ENCODE measurements at regions of chr20 and their contacts with region 1.

Region 1: DNA sequence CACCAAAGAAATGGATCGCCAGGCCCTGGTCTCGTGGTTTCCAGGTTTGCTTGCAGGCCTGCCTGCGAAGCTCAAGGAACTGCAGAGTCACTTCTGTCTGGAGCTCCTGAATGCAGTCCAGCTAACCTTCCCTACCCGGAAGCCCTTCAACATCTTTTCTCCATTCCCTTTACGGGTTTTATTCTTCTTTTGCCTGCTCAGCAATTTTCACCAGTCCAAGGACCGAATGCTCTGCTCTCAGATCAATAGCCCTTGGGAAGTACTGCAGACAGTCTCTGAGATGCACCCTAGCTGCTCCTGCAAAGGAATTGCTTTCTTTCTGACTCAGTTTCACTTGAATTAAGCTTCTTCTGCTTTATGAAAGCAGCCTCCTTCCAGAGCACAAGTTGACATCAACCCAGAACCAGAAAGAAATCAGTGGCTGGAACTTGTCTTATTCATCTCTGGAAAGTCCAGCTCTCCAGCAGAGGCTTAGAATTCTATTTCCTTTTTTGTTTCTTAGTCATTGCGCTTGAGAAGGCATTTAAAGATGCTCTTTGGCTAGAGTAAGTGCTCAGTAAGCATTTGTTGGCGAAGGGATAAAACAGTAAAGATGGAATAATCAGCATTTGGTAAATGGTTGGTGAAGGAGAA is 18.7 kb upstream of the YWHAB start:
- DNase-seq: no peak
- ATAC-seq: 0 out of 2 replicates have a peak, but pooled peaks have one; percentile 31
- H3K4me3 ChIP-seq: no peak overlapping the region
- H3K27ac ChIP-seq: no peak overlapping the region
- H3K4me1 ChIP-seq: peaks cover 5% of the 10 kb centered on the region; the same call in 1 of the 2 replicates
- H3K27me3 ChIP-seq: no peaks in the 10 kb centered on the region
- CTCF ChIP-seq: no peak

Region 2: DNA sequence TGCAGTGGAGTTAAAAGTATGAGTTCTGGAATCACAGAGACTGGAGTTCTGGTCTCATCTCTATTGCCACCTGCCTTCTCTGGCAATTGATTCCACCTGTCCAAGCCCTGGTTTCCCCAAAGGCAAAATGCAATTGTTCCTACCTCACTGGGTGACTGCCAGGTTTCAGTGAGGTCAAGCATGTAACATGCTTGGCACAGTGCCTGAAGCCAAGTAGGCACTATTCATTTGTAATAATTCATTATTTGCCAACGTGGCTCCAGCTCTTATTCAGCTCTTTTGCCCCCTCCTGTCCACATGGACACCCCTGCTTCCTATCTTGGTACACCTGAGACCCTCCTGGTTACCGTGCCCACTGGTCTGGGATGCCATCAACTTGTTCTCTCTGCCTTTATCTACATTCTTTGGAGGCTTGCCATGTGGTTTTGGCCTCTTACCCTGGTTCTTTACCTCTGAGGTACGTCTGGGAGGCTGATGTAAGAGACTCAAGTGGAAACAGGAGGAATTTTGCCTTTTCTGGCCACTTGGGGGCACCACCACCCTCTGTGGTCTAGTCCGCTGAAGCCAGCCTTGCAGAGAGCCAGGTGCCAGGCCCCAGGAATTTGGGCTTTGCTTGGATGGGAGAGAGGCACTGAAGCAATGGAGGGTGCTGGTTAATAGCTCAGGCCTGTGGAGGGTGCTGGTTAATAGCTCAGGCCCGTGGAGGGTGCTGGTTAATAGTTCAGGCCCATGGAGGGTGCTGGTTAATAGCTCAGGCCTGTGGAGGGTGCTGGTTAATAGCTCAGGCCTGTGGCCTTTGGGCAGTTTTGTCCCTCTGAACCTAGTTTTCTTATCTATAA is 119.4 kb before region 1 on chr20:
- CTCF ChIA-PET with region 1: interaction called, 6 read pairs
- POLR2A ChIA-PET with region 1: no interaction called
- in situ Hi-C with region 1: no loop called
- intact Hi-C with region 1: loop called (anchors 1 kb)
- DNase-seq: peak; percentile 69
- ATAC-seq: peak; percentile 82
- H3K4me3 ChIP-seq: peak overlapping the region; percentile 52 to 88
- H3K27ac ChIP-seq: peak overlapping the region; percentile 86; the same call in 1 of the 2 replicates
- H3K4me1 ChIP-seq: peaks cover 22% of the 10 kb centered on the region
- H3K27me3 ChIP-seq: no peaks in the 10 kb centered on the region
- CTCF ChIP-seq: peak; percentile 88

Region 3: GRCh38 chr20:44785769-44786168 is 81.0 kb before region 1 on chr20:
- CTCF ChIA-PET with region 1: interaction called, 16 read pairs
- POLR2A ChIA-PET with region 1: no interaction called
- in situ Hi-C with region 1: no loop called
- intact Hi-C with region 1: no loop called
- DNase-seq: no peak
- ATAC-seq: peak; percentile 77
- H3K4me3 ChIP-seq: no peak overlapping the region
- H3K27ac ChIP-seq: no peak overlapping the region
- H3K4me1 ChIP-seq: no peaks in the 10 kb centered on the region
- H3K27me3 ChIP-seq: no peaks in the 10 kb centered on the region
- CTCF ChIP-seq: no peak; the same call in 1 of the 2 replicates

Region 4: GRCh38 chr20:44800398-44801046 is 66.3 kb before region 1 on chr20:
- CTCF ChIA-PET with region 1: no interaction called
- POLR2A ChIA-PET with region 1: no interaction called
- in situ Hi-C with region 1: no loop called
- intact Hi-C with region 1: loop called (anchors 5 kb)
- DNase-seq: no peak
- ATAC-seq: no peak
- H3K4me3 ChIP-seq: no peak overlapping the region
- H3K27ac ChIP-seq: no peak overlapping the region
- H3K4me1 ChIP-seq: no peaks in the 10 kb centered on the region
- H3K27me3 ChIP-seq: no peaks in the 10 kb centered on the region
- CTCF ChIP-seq: peak; percentile 74

Region 5: DNA sequence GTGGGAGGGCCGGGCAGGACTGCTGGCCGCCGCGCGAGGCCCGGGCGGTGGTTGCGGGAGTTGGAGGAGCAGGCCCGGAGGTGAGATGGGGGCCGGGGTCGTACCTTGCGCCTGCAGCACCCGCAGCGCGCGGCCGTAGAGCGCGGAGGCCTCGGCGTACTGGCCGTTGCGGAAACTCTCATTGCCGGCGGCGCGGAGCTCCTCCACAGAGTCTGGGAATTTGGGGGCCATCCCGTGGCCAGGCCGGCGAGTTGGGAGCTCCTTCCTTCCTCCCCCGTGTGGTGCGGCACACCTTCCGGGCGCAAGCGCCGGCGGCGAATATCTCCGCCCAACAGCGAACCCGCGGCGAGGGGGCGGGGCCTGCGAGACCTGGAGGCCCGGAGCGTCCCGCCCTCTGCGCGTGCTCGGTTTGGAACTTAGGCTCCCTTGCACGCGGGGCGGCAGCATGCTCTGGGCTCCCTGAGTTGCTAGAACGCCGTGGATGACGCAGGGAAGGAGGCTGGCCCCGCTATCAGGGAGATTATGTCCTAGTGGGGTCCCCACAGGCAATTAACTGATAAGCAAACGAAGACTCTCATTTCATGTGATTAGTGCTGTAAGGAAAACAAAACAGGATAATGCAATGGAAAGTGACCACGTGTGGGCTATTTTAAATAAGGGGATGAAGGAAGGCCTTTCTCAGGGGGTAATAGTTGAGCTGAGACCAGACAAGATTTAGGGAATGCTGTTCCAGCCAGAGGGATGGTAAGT is 93.5 kb after region 1 on chr20 and contains the start of gene TOMM34:
- CTCF ChIA-PET with region 1: no interaction called
- POLR2A ChIA-PET with region 1: no interaction called
- in situ Hi-C with region 1: no loop called
- intact Hi-C with region 1: no loop called
- DNase-seq: peak; percentile 70
- ATAC-seq: peak; percentile 99
- H3K4me3 ChIP-seq: peak within 1 kb of the TSS; percentile 77 to 91
- H3K27ac ChIP-seq: peak within 1 kb of the TSS; percentile 94
- H3K4me1 ChIP-seq: peaks cover 10% of the 10 kb centered on the region
- H3K27me3 ChIP-seq: no peaks in the 10 kb centered on the region
- CTCF ChIP-seq: no peak
- total RNA-seq, gene TOMM34: 30.6 TPM

Measured in Panc1 (cell line).